ENCODE measurements at regions of chr17 and their contacts with region 1.

Region 1: GRCh38 chr17:78588258-78589030 is 11.2 kb upstream of the DNAH17 start:
- DNase-seq: peak in 2 of 5 donors; percentile 31 to 41
- ATAC-seq: no peak
- H3K4me3 ChIP-seq: no peak overlapping the region
- H3K27ac ChIP-seq: no peak overlapping the region
- H3K4me1 ChIP-seq: peaks cover 0 to 30% (median 11%) of the 10 kb centered on the region in 12 donors
- H3K27me3 ChIP-seq: peaks cover 0 to 11% (median 0%) of the 10 kb centered on the region in 9 donors
- CTCF ChIP-seq: no peak
- POLR2A ChIP-seq: no peak

Region 2: GRCh38 chr17:78541488-78542237 is 46.8 kb before region 1 on chr17:
- intact Hi-C with region 1: loop called in 1 of 10 experiments (anchors 5 kb)
- DNase-seq: peak in 1 of 5 donors; percentile 43
- ATAC-seq: peak in 2 of 4 donors; percentile 44 to 47
- H3K4me3 ChIP-seq: no peak overlapping the region
- H3K27ac ChIP-seq: no peak overlapping the region
- H3K4me1 ChIP-seq: peaks cover 0 to 6% (median 0%) of the 10 kb centered on the region in 12 donors
- H3K27me3 ChIP-seq: no peaks in the 10 kb centered on the region
- CTCF ChIP-seq: no peak
- POLR2A ChIP-seq: no peak

Region 3: DNA sequence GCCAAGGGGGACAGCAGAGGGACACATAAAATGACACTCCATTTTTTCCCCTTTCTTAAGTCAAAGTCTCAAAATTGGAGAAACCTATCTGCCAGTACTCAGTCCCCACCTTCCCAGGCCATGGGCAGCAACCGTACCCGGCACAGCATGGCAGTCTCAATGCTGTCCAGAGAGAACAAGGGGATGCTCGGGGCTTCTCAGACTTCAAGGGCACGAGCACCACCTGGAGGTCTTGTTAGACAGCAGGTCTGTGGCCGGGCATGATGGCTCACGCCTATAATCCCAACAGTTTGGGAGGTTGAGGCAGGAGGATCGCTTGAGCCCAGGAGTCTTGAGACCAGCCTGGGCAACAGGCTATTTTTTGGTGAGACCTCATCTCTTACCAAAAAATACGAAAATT is 14.5 kb before region 1 on chr17:
- intact Hi-C with region 1: no loop called
- DNase-seq: peak in 2 of 5 donors; percentile 3 to 22
- ATAC-seq: no peak
- H3K4me3 ChIP-seq: no peak overlapping the region
- H3K27ac ChIP-seq: no peak overlapping the region
- H3K4me1 ChIP-seq: peaks cover 0 to 11% (median 0%) of the 10 kb centered on the region in 12 donors
- H3K27me3 ChIP-seq: no peaks in the 10 kb centered on the region
- CTCF ChIP-seq: no peak
- POLR2A ChIP-seq: no peak

Region 4: DNA sequence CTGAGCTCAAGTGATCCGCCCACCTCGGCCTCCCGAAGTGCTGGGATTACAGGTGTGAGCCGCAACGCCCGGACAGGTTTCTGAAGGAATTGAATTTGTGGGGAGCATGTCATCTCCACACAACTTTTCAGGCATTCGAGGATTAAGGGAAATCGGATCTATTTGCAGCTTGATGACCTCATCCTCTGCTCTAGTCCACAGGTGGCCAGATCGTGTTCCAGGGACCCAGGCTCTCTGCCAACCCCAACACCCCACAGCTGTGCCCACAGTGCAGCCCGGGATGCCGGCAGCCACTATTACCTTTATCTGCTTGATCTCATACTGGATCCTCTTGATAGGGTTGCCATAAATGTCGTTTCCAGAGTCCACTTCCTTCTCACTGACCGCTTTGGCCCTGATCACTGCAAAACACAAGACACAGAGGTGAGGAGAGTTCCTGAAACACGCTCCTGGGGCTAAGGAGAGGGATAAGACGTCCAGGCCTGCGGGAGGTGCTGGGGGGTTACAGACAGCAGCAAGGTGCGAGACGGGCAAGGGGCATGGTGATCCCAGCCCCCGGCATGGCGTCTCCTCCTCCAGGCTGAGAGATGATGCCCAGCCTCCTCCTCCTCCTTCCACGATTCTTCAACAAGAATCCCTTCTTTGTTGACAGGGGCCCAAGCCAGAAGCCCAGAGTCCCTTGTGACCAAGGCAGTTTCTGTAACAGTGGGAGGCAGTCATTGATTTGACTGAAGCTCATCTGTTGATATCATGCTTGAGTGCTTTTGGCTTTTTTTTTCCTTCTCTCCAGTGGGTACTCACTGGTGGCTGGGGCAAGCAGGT is 285.3 kb after region 1 on chr17:
- intact Hi-C with region 1: no loop called
- DNase-seq: peak in 4 of 5 donors; percentile 38 to 68 (median 62)
- ATAC-seq: peak; percentile 48 to 82 (median 50)
- H3K4me3 ChIP-seq: no peak overlapping the region
- H3K27ac ChIP-seq: peak overlapping the region; percentile 20 to 75 (median 65)
- H3K4me1 ChIP-seq: peaks cover 0 to 46% (median 40%) of the 10 kb centered on the region in 12 donors
- H3K27me3 ChIP-seq: no peaks in the 10 kb centered on the region
- CTCF ChIP-seq: no peak
- POLR2A ChIP-seq: no peak

Measured in heart left ventricle (tissue), 16 donors.